Lower leg skin (tissue), 4 donors: ENCODE measurements at regions of chr1 and their contacts with region 1.

Region 1: GRCh38 chr1:88058205-88058604 is 625.9 kb upstream of the PKN2 start:
- DNase-seq: no peak
- H3K4me3 ChIP-seq: no peak overlapping the region
- CTCF ChIP-seq: no peak
- POLR2A ChIP-seq: no peak

Region 2: GRCh38 chr1:88068407-88068960 is 10.3 kb after region 1 on chr1:
- intact Hi-C with region 1: no loop called
- DNase-seq: no peak
- H3K4me3 ChIP-seq: no peak overlapping the region
- CTCF ChIP-seq: no peak
- POLR2A ChIP-seq: no peak

Region 3: DNA sequence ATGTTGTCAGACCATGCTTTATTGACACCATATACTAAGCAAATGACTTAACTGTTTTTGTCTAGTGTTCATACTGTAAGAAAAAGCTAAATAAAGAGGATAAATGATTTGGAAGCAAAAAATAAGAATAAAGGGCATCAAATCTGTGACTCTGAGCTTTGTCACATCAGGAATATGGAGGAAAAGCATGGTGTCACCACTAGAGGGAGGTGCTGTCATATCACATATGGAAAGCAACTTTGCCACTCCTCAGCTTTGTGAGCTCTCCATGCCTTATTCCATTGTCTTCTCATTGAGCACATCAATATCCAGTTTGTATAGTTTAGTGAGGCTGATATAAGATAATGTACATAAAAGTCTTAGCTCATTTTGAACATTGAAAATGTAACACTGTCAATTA is 1027.6 kb after region 1 on chr1:
- intact Hi-C with region 1: loop called (anchors 5 kb)
- DNase-seq: no peak
- H3K4me3 ChIP-seq: no peak overlapping the region
- CTCF ChIP-seq: no peak
- POLR2A ChIP-seq: no peak